SK-N-SH (cell line): ENCODE measurements at regions of chr5 and their contacts with region 1.

Region 1: GRCh38 chr5:132064738-132065331 is 4.4 kb downstream of the IL3 start:
- DNase-seq: peak; percentile 87
- H3K4me3 ChIP-seq: peak overlapping the region in 1 of 2 experiments; percentile 43; a peak in 1 of 4 replicates
- H3K27ac ChIP-seq: no peak overlapping the region
- H3K4me1 ChIP-seq: no peaks in the 10 kb centered on the region
- H3K27me3 ChIP-seq: no peaks in the 10 kb centered on the region
- CTCF ChIP-seq: peak; percentile 89
- EP300 ChIP-seq: no peak
- RAD21 ChIP-seq: peak; percentile 74

Region 2: GRCh38 chr5:131423056-131423455 is 641.8 kb before region 1 on chr5:
- CTCF ChIA-PET with region 1: interaction called, 14 read pairs
- POLR2A ChIA-PET with region 1: no interaction called
- DNase-seq: peak; percentile 52
- H3K4me3 ChIP-seq: no peak overlapping the region
- H3K27ac ChIP-seq: no peak overlapping the region
- H3K4me1 ChIP-seq: no peaks in the 10 kb centered on the region
- H3K27me3 ChIP-seq: no peaks in the 10 kb centered on the region
- CTCF ChIP-seq: peak; percentile 75
- EP300 ChIP-seq: no peak
- RAD21 ChIP-seq: peak; percentile 84

Region 3: DNA sequence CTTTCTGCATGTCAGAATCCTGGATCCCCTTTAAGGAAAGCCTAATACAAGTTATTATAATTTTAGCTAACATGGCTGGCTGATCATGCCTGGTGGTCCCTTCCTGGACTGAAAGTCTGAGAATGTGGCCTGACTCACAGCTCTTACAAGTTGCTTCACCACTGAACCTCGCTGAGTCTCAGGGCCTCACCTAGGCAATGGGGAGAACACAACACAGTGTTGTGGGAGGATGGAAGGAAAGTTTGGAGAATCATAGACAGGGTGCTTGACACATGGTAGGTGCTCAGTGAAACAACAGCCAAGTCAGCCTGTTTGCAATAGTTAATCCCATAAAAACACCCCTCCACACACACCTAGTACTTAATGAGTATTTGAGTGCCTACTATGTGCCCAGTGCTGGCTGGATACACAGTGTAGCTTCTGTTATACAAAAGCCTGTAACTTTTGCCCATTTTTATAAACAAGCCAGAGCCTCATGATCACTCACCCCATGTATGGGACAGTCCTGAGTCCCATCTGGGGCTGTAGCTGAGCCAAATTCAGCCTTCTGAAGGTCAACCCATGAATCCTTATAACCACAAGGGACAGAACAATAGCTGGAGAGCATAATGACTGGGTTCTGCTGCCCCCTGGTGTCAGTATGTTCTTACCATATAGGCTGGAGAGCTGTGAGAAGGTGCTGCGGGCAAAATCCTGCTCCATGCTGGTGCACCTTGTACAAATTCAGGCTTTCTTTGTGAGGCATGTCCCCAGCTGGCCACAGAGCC is 57.3 kb before region 1 on chr5:
- CTCF ChIA-PET with region 1: interaction called, 11 read pairs
- POLR2A ChIA-PET with region 1: no interaction called
- DNase-seq: peak; percentile 75
- H3K4me3 ChIP-seq: no peak overlapping the region; a peak in 1 of 4 replicates
- H3K27ac ChIP-seq: no peak overlapping the region
- H3K4me1 ChIP-seq: peaks cover 0 to 9% of the 10 kb centered on the region in 2 experiments; a peak in 1 of 4 replicates
- H3K27me3 ChIP-seq: no peaks in the 10 kb centered on the region
- CTCF ChIP-seq: peak; percentile 72
- EP300 ChIP-seq: no peak
- RAD21 ChIP-seq: peak; percentile 92

Region 4: GRCh38 chr5:132076202-132076838 is 11.5 kb after region 1 on chr5:
- CTCF ChIA-PET with region 1: interaction called, 21 read pairs
- POLR2A ChIA-PET with region 1: no interaction called
- DNase-seq: no peak
- H3K4me3 ChIP-seq: no peak overlapping the region
- H3K27ac ChIP-seq: no peak overlapping the region
- H3K4me1 ChIP-seq: peaks cover 0 to 5% of the 10 kb centered on the region in 2 experiments; a peak in 1 of 4 replicates
- H3K27me3 ChIP-seq: no peaks in the 10 kb centered on the region
- CTCF ChIP-seq: no peak
- EP300 ChIP-seq: no peak
- RAD21 ChIP-seq: no peak

Region 5: GRCh38 chr5:132086277-132086794 is 21.5 kb after region 1 on chr5:
- CTCF ChIA-PET with region 1: interaction called, 11 read pairs
- POLR2A ChIA-PET with region 1: no interaction called
- DNase-seq: peak; percentile 59
- H3K4me3 ChIP-seq: no peak overlapping the region
- H3K27ac ChIP-seq: peak overlapping the region; percentile 22 to 74
- H3K4me1 ChIP-seq: peaks cover 17% of the 10 kb centered on the region in 2 experiments
- H3K27me3 ChIP-seq: no peaks in the 10 kb centered on the region
- CTCF ChIP-seq: no peak
- EP300 ChIP-seq: peak; percentile 17 to 88; a peak in 2 of 4 replicates
- RAD21 ChIP-seq: no peak

Region 6: GRCh38 chr5:132093271-132093670 is 28.4 kb after region 1 on chr5:
- CTCF ChIA-PET with region 1: interaction called, 10 read pairs
- POLR2A ChIA-PET with region 1: no interaction called
- DNase-seq: no peak
- H3K4me3 ChIP-seq: no peak overlapping the region
- H3K27ac ChIP-seq: no peak overlapping the region
- H3K4me1 ChIP-seq: peaks cover 0 to 22% of the 10 kb centered on the region in 2 experiments; a peak in 3 of 4 replicates
- H3K27me3 ChIP-seq: no peaks in the 10 kb centered on the region
- CTCF ChIP-seq: no peak
- EP300 ChIP-seq: no peak
- RAD21 ChIP-seq: no peak

Region 7: GRCh38 chr5:132134384-132134783 is 69.5 kb after region 1 on chr5:
- CTCF ChIA-PET with region 1: interaction called, 13 read pairs
- POLR2A ChIA-PET with region 1: no interaction called
- DNase-seq: peak; percentile 8
- H3K4me3 ChIP-seq: no peak overlapping the region
- H3K27ac ChIP-seq: no peak overlapping the region
- H3K4me1 ChIP-seq: no peaks in the 10 kb centered on the region
- H3K27me3 ChIP-seq: peaks cover 5% of the 10 kb centered on the region; the same call in 1 of the 2 replicates
- CTCF ChIP-seq: peak; percentile 51
- EP300 ChIP-seq: no peak
- RAD21 ChIP-seq: peak; percentile 38